ENCODE measurements at regions of chr15 and their contacts with region 1.

Region 1: DNA sequence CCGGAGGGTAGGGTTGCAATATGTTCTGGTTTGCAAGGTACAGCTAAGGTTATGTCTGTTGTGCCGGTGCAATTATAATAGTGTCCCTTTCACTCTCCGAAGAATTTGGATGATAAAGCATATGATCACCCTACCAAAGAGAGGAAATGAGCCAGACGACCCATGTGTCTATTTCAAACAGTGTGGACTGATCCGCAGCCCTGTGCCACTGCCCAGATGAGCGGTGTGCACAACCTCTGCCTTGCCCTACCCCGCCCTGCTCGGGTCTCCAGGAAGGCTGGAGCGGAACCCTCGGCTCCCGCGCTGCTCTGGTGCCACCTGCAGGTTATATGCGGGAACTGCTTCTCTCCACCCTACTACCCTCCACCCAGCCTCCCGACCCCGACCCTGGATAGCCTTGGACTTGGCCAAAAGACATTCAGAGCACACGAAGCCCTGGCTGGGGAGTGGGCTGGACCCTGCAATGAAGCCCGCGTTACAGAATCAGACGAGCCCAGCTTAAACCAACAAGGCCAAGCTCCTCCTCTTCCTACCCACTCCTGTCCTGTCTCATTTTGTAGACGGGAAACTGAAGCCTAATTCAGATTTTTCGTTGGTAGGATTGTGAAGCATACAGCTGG is 68.4 kb upstream of the CHRNB4 start:
- DNase-seq: peak; percentile 61 to 81
- ATAC-seq: peak; percentile 91 to 99 (median 98)
- H3K4me3 ChIP-seq: peak overlapping the region; percentile 15
- H3K27ac ChIP-seq: no peak overlapping the region
- H3K4me1 ChIP-seq: no peaks in the 10 kb centered on the region
- H3K27me3 ChIP-seq: peaks cover 0 to 4% (median 1%) of the 10 kb centered on the region in 3 donors
- CTCF ChIP-seq: peak; percentile 85

Region 2: DNA sequence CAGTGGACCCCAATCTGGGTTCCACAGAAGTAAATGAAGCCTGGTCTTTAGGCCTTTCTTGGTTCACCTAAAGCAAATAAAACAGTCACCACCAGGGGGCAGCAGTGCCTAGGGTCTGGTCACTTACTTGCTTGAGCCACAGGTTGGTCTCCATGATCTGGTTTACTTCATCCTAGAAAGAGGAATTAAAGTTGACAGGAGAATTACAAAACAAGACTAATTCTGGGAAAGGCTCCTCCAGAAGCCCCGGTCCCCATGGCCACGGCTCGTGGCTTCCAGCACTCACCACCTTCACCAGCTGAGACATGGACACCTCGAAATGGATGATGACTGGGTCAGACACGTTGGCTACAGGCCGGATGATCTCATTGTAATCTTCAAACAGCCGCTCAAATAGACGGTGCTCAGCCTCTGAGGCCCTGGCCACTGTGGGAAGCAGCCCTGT is 90.9 kb before region 1 on chr15:
- intact Hi-C with region 1: loop called (anchors 2 kb)
- DNase-seq: peak; percentile 79 to 85
- ATAC-seq: peak; percentile 74 to 88 (median 78)
- H3K4me3 ChIP-seq: no peak overlapping the region
- H3K27ac ChIP-seq: no peak overlapping the region
- H3K4me1 ChIP-seq: peaks cover 7% of the 10 kb centered on the region
- H3K27me3 ChIP-seq: peaks cover 0 to 36% (median 17%) of the 10 kb centered on the region in 3 donors
- CTCF ChIP-seq: peak; percentile 92

Region 3: DNA sequence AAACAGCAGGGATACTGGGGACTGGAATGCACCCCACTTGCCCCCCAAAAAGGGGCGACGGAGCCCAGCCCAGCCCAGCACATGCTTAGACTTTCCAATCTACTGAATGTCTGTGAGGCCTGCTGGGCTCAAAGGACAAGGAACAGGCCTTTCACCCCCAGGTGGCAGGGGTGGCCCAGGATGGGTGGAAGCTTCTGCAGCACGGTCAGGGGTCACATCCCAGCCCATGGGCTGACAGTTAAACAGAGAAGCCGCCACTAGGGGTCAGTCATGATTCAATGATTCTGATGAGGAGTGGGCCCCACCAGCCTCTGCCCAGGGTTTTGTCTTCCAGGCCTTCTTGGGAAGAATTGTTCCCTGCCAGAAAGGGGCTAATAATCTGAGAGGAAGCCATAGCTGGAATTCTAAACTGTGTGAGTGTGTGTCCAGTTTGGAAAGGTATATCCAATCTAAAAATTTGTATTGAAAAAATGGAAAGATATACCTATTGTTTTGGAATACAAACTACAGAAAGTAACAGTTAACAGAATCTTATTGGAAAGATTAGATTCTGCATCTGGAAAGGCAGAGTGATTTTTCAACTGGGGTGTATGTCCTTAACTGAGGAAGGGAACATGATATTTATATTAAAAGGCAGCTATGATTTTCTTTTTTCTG is 70.6 kb before region 1 on chr15:
- intact Hi-C with region 1: loop called (anchors 2 to 5 kb)
- DNase-seq: peak in 1 of 2 donors; percentile 36
- ATAC-seq: peak; percentile 59 to 84 (median 72)
- H3K4me3 ChIP-seq: no peak overlapping the region
- H3K27ac ChIP-seq: no peak overlapping the region
- H3K4me1 ChIP-seq: peaks cover 8% of the 10 kb centered on the region
- H3K27me3 ChIP-seq: peaks cover 0 to 15% (median 4%) of the 10 kb centered on the region in 3 donors
- CTCF ChIP-seq: peak; percentile 61